Activated CD4-positive, alpha-beta T cell treated with anti-CD3 and anti-CD28 coated beads for 36 hours (primary cell): ENCODE measurements at regions of chr15 and their contacts with region 1.

Region 1: GRCh38 chr15:43824302-43825246 is at the start of gene MFAP1:
- DNase-seq: peak; percentile 95
- ATAC-seq: peak; percentile 85
- H3K4me3 Mint-ChIP-seq: peak within 1 kb of the TSS; percentile 100
- H3K27ac Mint-ChIP-seq: peak within 1 kb of the TSS; percentile 99
- H3K4me1 Mint-ChIP-seq: peaks cover 53% of the 10 kb centered on the region
- H3K27me3 Mint-ChIP-seq: no peaks in the 10 kb centered on the region
- total RNA-seq, gene MFAP1: 51.3 to 56.2 TPM

Region 2: DNA sequence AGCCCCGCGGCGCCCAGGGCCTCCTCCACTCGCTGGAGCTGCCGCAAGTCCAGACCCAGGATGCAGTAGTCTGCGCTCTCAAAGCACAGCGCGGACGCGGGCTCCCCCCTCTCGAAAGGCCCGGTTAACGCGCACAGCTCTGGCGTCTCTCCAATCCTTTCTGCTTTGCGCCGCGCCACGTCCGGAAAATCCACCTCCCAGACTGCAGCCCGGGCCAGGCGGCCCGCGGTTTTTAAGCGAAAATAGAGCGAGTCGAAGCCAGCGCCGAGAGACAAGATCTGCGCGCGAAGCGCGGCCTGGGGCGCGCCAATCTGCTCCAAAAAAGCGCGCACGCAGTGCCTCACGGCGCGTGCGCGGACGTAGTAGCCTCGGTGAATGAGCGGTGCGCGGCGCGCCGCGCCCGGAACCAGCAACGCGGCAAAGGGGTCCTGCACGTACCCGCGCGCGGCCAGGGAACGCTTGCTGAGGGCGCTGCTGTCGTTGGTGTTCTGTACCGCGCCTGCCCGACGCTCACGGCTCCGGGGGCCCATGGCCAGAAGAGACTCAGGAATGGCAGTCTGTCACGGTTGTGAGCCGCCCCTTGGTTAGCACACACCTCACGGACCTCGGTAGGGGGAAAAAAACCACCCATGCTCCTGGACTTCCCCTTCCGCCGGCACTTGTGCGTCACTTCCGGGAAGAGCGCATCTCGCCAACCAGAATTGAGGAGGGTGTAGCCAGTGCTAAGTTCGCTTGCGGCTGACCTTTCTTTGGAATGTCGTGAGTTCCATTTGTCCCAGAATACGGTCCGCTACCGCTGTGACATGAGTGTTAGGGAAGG is 494.4 kb before region 1 on chr15 and contains the start of gene LCMT2:
- CTCF ChIA-PET with region 1: no interaction called
- POLR2A ChIA-PET with region 1: no interaction called
- intact Hi-C with region 1: loop called in 1 of 2 experiments (anchors 1 kb)
- DNase-seq: peak; percentile 93
- ATAC-seq: peak; percentile 91
- H3K4me3 Mint-ChIP-seq: peak within 1 kb of the TSS; percentile 91
- H3K27ac Mint-ChIP-seq: peak within 1 kb of the TSS; percentile 95
- H3K4me1 Mint-ChIP-seq: peaks cover 32% of the 10 kb centered on the region
- H3K27me3 Mint-ChIP-seq: no peaks in the 10 kb centered on the region
- total RNA-seq, gene LCMT2: 7.6 to 8.5 TPM

Region 3: GRCh38 chr15:43776718-43777583 is 47.6 kb before region 1 on chr15 and contains the start of gene ELL3:
- CTCF ChIA-PET with region 1: interaction called, 7 read pairs
- POLR2A ChIA-PET with region 1: interaction called, 10 read pairs
- intact Hi-C with region 1: loop called in 1 of 2 experiments (anchors 1 kb)
- DNase-seq: peak; percentile 94
- ATAC-seq: peak; percentile 84
- H3K4me3 Mint-ChIP-seq: peak within 1 kb of the TSS; percentile 78
- H3K27ac Mint-ChIP-seq: peak within 1 kb of the TSS; percentile 92
- H3K4me1 Mint-ChIP-seq: peaks cover 19% of the 10 kb centered on the region
- H3K27me3 Mint-ChIP-seq: no peaks in the 10 kb centered on the region
- total RNA-seq, gene ELL3: 3.6 TPM

Region 4: DNA sequence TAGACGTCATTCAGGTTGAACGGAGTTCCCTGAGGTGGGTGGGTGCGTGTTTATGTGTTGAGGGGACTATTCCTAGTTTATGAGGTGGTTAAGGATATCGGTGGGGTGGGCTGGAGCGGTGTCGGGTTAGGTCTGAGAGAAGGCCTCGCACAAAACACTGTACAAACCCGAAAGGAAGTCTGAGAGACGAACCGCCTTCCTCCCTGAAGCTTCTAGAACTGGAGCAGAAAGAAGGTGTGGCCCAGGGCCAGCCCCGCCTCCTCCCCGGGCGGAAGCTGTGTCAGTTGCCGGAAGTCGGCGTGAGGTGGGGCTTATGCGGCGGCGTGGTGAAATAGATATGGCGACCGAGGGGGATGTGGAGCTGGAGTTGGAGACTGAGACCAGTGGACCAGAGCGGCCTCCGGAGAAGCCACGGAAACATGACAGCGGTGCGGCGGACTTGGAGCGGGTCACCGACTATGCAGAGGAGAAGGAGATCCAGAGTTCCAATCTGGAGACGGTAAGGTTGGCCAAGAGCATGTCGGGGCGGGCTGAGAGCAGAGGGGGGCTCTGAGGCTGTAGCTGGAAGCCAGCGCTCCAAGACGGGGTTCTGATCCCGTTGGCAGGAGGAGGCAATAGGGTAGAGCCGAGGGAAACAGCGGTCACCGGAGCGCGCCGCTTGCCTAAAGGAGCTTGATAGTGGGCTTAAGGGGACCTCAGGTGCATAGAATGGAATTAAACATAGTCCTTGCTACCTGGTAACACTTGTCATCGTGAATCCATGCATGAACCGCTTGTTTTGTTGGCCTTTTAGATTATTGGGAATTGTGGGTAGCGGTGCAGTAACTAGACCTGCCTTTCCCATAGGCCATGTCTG is 24.1 kb before region 1 on chr15 and contains the start of gene HYPK:
- CTCF ChIA-PET with region 1: interaction called, 4 read pairs
- POLR2A ChIA-PET with region 1: interaction called, 18 read pairs
- intact Hi-C with region 1: loop called (anchors 1 kb)
- DNase-seq: peak; percentile 95
- ATAC-seq: peak; percentile 97
- H3K4me3 Mint-ChIP-seq: peak within 1 kb of the TSS; percentile 85
- H3K27ac Mint-ChIP-seq: peak within 1 kb of the TSS; percentile 98
- H3K4me1 Mint-ChIP-seq: peaks cover 43% of the 10 kb centered on the region
- H3K27me3 Mint-ChIP-seq: no peaks in the 10 kb centered on the region
- total RNA-seq, gene HYPK: 14.0 to 16.4 TPM

Region 5: GRCh38 chr15:44286814-44287452 is 462.4 kb after region 1 on chr15:
- CTCF ChIA-PET with region 1: no interaction called
- POLR2A ChIA-PET with region 1: interaction called, 4 read pairs
- intact Hi-C with region 1: loop called in 1 of 2 experiments (anchors 5 kb)
- DNase-seq: no peak
- ATAC-seq: no peak
- H3K4me3 Mint-ChIP-seq: peak overlapping the region; percentile 90
- H3K27ac Mint-ChIP-seq: peak overlapping the region; percentile 97
- H3K4me1 Mint-ChIP-seq: peaks cover 32% of the 10 kb centered on the region
- H3K27me3 Mint-ChIP-seq: peaks cover 2% of the 10 kb centered on the region

Region 6: GRCh38 chr15:44536962-44537734 is 712.6 kb after region 1 on chr15 and contains the start of gene EIF3J:
- CTCF ChIA-PET with region 1: no interaction called
- POLR2A ChIA-PET with region 1: no interaction called
- intact Hi-C with region 1: loop called in 1 of 2 experiments (anchors 10 kb)
- DNase-seq: peak; percentile 97
- ATAC-seq: peak; percentile 95
- H3K4me3 Mint-ChIP-seq: peak within 1 kb of the TSS; percentile 75
- H3K27ac Mint-ChIP-seq: peak within 1 kb of the TSS; percentile 95
- H3K4me1 Mint-ChIP-seq: peaks cover 45% of the 10 kb centered on the region
- H3K27me3 Mint-ChIP-seq: no peaks in the 10 kb centered on the region
- total RNA-seq, gene EIF3J: 106 to 143 TPM

Region 7: DNA sequence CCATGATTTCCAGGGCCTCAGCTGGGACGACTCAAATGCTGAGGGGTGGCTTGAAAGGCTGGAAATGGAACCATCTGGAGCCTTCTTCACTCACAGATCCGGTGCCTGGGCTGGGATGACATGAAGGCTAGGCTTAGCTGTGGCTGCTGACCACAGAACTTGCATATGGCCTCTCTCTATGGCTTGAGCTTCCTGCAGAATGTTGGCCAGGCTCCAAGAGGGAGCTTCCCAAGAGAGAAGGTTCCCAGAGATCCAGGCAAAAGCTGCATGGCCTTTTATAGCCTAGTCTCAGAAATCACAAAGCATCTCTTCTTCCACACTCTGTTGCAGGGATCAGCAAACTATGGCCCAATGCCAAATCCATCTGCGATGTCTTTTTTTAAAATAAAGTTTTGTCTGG is 1509.0 kb after region 1 on chr15:
- CTCF ChIA-PET with region 1: no interaction called
- POLR2A ChIA-PET with region 1: no interaction called
- intact Hi-C with region 1: no loop called
- DNase-seq: no peak
- ATAC-seq: no peak
- H3K4me3 Mint-ChIP-seq: no peak overlapping the region
- H3K27ac Mint-ChIP-seq: no peak overlapping the region
- H3K4me1 Mint-ChIP-seq: peaks cover 6% of the 10 kb centered on the region
- H3K27me3 Mint-ChIP-seq: no peaks in the 10 kb centered on the region